ENCODE measurements at regions of chr4 and their contacts with region 1.

Region 1: DNA sequence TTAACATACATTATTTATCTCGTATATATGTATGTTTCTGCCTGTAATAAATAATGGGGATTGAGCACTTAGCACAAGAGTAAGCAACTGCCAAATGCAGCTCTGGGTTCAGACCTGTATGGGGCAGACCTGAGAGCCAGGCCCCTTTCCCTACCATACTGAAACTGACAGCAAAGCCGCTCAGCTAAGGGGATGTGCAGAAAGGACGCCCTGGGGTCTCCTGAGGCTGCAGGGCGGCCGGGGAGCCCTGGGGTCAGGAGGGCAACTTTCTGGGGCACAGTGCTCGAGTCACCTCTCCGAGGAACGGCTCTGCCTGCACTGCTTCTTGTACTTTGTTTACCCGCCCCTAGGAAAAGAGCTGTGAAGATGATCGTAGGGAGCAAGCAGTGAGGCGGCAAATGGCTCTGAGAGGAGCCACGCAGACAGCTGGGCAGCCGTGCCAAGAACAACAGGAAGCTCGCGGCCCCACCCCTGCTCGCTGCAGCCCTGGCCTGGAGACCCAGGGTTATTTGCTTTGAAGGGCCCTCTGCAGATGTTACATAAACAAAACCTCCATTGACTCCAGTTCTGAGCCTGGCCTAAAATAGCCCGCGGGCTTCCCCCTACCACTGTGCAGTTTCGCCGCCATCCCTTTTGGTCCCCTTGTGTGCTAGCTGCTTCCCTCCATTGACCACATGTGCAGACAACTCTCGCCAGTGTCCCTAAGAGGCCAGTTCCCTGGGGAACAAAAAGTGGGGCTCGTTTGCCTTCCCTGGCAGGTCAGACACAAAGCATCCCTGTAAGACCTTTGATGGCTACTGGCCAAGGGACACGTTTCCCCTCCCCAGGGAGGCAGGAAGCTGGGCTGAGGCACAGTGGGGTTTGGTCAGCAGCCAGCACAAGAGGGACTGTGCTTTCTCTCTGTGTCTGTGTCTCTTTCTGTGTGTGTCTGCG is 111.3 kb upstream of the LNX1 start:
- DNase-seq: peak; percentile 86
- H3K4me3 ChIP-seq: peak overlapping the region; percentile 26; the same call in 1 of the 2 replicates
- H3K27ac ChIP-seq: peak overlapping the region; percentile 64
- H3K4me1 ChIP-seq: peaks cover 24% of the 10 kb centered on the region
- H3K27me3 ChIP-seq: no peaks in the 10 kb centered on the region

Region 2: DNA sequence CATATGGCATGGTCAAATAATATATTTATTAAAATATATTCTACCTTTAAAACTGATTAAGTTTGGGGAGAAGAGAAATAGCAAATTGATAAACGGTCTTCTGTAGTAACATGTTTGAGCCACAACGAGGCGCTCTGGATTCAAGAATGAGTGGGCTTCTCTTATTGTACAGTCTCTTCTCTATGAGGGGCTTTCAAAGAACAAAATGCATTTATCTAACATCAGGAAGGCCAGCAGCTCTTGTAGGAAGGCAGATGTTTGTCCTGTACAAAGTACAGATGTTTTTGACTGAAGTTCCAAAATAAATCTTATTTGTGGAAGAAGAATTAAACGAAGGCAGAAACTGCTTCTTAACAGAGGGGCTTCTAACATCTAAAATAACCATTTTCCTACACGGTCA is 686.9 kb before region 1 on chr4:
- in situ Hi-C with region 1: loop called (anchors 25 kb)
- DNase-seq: peak; percentile 70
- H3K4me3 ChIP-seq: no peak overlapping the region
- H3K27ac ChIP-seq: peak overlapping the region; percentile 43
- H3K4me1 ChIP-seq: peaks cover 74% of the 10 kb centered on the region
- H3K27me3 ChIP-seq: no peaks in the 10 kb centered on the region

Region 3: DNA sequence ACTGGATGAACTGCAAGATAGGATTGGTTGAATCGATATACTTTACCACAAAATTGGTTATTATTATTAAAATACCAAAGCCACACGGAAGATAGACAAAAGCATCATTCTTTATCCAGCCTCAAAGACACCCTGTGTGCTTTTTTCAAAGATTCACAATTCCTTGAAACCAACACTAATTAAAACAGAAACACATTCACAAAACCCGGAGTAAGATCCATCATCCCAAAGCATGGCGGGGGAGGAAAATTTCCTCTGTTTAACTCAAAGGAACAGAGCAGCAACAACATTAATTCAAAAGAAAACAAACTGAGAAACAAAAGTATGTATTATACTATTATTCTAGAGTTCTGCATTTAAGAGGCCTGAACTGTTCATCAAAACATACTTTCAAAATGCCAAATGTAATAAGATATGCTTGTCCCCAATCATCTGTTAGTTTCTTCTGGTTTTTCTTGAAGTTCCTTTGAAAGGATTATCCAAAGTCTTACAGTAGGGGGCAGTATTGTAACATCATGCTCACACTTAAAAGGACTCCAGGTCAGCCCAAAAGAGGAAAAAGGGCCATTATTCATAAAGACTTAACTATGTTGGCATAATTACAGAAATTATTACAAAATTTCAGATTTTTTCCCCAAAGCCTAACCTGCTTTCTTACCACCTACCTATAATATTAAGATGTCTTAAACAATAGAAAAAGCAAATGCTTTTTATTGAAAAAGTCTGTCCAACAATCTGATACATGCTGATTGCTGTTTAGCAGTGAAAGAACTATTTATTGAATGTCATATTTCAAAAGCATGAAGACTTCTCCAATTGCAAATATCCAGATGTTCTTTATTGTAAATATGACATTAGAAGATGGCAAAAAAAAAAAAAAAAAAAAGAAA is 505.5 kb before region 1 on chr4:
- in situ Hi-C with region 1: loop called (anchors 25 kb)
- DNase-seq: peak; percentile 80
- H3K4me3 ChIP-seq: peak overlapping the region; percentile 65
- H3K27ac ChIP-seq: peak overlapping the region; percentile 37
- H3K4me1 ChIP-seq: peaks cover 62% of the 10 kb centered on the region
- H3K27me3 ChIP-seq: no peaks in the 10 kb centered on the region

Region 4: DNA sequence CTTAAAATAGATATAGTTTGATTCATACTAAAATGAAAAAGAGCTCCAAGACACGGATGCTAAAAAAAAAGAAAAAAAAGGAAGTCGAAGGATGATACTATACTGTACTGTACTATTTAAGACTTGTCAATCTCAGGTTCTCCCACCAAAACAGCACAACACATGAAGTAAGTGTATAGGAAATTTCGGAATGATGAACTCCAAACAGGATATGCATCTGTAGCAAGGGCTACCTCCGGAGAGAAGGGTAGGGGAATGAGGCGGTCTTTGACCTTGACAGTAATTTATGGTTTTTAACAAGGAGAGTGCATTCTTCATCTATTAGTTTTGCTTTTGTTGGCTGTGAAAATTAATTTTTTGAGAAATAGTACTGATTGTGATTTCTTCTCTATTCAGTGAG is 325.7 kb before region 1 on chr4:
- in situ Hi-C with region 1: no loop called
- DNase-seq: peak; percentile 14
- H3K4me3 ChIP-seq: peak overlapping the region; percentile 93
- H3K27ac ChIP-seq: peak overlapping the region; percentile 27; the same call in 1 of the 2 replicates
- H3K4me1 ChIP-seq: peaks cover 29% of the 10 kb centered on the region
- H3K27me3 ChIP-seq: no peaks in the 10 kb centered on the region

Region 5: GRCh38 chr4:53601251-53601764 is 101.3 kb before region 1 on chr4:
- in situ Hi-C with region 1: loop called (anchors 25 kb)
- DNase-seq: peak; percentile 36
- H3K4me3 ChIP-seq: no peak overlapping the region
- H3K27ac ChIP-seq: no peak overlapping the region
- H3K4me1 ChIP-seq: 0 out of 2 replicates have a peak, but pooled peaks cover 4% of the 10 kb centered on the region
- H3K27me3 ChIP-seq: no peaks in the 10 kb centered on the region

Region 6: DNA sequence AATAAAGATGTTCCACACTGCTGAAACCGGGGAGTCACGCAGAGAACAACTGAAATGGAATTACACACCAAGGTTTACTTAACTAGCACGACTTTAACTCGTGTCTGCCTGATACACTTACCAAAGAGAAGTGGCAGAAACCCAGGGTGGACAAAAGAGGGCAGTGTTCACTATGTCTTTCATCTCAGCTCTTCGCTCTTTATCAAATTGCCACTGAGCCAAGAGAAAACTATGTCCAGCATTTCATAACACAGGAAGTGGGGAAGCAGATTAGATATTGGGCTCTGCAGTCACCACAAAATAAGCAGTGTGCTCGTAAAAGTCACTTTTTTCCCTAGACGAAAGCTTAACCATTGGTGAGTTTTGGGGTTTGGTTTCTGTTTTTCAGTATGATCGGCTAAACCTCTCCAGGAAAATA is 206.1 kb after region 1 on chr4:
- in situ Hi-C with region 1: loop called (anchors 5 kb)
- DNase-seq: peak; percentile 89
- H3K4me3 ChIP-seq: peak overlapping the region; percentile 66
- H3K27ac ChIP-seq: peak overlapping the region; percentile 66
- H3K4me1 ChIP-seq: peaks cover 49% of the 10 kb centered on the region
- H3K27me3 ChIP-seq: no peaks in the 10 kb centered on the region

Region 7: DNA sequence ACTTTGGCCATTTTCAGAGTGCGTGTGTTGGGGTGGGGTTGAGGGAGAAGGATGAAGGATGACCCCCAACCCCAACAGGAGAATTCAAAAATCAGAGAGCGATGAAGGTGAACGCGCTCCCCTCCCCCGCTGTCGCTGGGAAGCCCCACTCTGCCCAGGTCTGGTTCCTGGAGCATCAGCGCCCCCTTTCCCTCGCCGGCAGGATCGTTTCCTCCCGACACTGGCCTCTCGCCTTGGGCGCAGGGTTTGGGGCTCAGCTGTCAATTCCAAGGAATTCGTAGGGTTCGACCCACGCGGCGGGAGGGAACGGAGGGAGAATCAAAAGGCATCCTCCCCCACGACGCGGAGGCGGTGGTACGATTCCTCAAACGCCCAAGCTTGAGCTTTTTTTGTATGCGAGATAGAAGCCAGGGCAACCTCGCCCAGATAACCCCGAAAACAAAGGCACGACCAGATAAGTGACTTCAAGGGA is 525.5 kb after region 1 on chr4:
- in situ Hi-C with region 1: loop called (anchors 10 kb)
- DNase-seq: peak; percentile 91
- H3K4me3 ChIP-seq: peak overlapping the region; percentile 85
- H3K27ac ChIP-seq: peak overlapping the region; percentile 87
- H3K4me1 ChIP-seq: peaks cover 25% of the 10 kb centered on the region
- H3K27me3 ChIP-seq: no peaks in the 10 kb centered on the region

Region 8: DNA sequence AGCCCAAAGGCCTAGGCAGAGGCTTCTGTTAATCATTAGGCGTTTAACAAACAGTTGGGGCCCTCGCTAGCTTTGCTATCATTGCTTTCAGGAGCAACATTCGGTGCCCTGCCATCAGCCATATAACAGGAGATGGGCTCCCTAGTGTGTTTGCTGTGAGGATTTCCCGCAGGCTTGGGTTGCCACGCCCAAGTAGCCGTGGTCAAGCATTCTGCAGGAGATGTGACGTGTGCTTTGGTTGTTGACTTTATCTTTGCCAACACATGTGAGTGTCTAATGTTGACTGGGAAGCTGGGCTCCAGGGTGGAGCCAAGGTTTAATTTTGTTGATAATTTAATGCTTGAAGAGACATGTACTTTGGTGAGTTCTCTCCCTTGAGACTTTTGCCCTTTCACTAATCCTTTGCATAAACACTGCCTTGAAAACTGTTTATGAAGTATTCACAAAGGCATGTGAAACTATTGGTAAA is 770.5 kb after region 1 on chr4:
- in situ Hi-C with region 1: no loop called
- DNase-seq: peak; percentile 46
- H3K4me3 ChIP-seq: no peak overlapping the region
- H3K27ac ChIP-seq: no peak overlapping the region
- H3K4me1 ChIP-seq: no peaks in the 10 kb centered on the region
- H3K27me3 ChIP-seq: no peaks in the 10 kb centered on the region

Measured in GM23248 (cell line).